CD8-positive, alpha-beta memory T cell (primary cell): ENCODE measurements at regions of chr3 and their contacts with region 1.

Region 1: DNA sequence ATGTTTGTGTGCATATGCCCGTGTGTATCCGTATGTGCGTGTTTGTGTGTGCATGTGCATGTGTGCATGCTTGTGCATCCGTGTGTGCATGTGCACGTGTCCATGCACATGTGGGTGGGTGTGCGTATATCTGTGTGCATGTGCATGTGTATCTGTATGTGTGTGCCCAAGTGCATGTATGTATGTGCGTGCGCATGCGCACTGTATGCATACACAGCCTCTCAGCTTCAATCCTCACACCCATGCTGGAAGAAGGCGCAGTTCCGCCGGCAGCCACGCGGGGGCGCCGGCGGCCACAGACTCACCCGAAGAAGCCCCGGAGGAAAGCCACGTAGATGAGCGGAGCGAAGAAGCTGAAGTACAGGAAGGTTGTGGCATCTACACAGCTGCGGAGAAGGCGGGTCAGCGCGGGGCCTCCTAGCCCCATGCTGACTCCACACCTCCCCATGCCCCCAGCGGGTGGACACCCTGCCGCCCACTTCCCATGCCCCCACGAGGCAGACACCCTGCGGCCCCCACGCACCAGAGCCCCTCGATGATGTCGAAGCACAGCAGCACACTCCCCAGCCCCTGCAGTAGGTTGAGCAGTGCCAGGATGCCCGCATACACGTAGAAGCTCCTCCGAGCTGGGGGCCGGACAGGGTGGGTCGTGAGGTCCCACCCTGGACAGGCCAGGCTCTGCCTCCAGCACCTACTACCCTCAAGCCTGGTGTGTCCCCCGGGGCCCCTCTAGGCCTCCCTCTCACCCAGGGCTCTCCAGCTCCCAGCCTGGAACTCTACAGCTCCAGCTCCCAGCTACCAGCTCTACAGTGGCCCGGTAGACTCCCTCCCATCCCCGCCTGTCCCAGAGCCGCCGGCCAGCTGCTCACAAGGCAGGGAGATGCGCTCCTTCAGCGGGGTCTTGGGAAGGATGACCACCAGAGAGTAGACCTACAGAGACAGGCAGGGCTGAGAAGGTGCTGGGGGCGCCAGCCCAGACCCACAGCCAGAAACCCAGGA is 15.4 kb downstream of the TPRA1 start:
- DNase-seq: peak; percentile 72 to 89 (median 76)
- H3K4me3 ChIP-seq: no peak overlapping the region
- H3K4me3 Mint-ChIP-seq: peak overlapping the region in 6 of 7 donors; percentile 14 to 72 (median 45)
- H3K27ac ChIP-seq: no peak overlapping the region
- H3K27ac Mint-ChIP-seq: peak overlapping the region; percentile 0 to 71 (median 52)
- H3K4me1 ChIP-seq: peaks cover 8% of the 10 kb centered on the region
- H3K4me1 Mint-ChIP-seq: peaks cover 7 to 27% (median 13%) of the 10 kb centered on the region in 3 donors
- H3K27me3 ChIP-seq: no peaks in the 10 kb centered on the region
- H3K27me3 Mint-ChIP-seq: no peaks in the 10 kb centered on the region

Region 2: GRCh38 chr3:127544192-127544802 is 30.9 kb before region 1 on chr3:
- CTCF ChIA-PET with region 1: interaction called, 12 read pairs
- POLR2A ChIA-PET with region 1: no interaction called
- DNase-seq: peak; percentile 33 to 74 (median 42)
- H3K4me3 ChIP-seq: no peak overlapping the region
- H3K4me3 Mint-ChIP-seq: peak overlapping the region in 2 of 7 donors; percentile 13 to 42
- H3K27ac ChIP-seq: no peak overlapping the region
- H3K27ac Mint-ChIP-seq: peak overlapping the region in 1 of 8 donors; percentile 15
- H3K4me1 ChIP-seq: peaks cover 2% of the 10 kb centered on the region
- H3K4me1 Mint-ChIP-seq: peaks cover 4 to 13% (median 5%) of the 10 kb centered on the region in 3 donors
- H3K27me3 ChIP-seq: no peaks in the 10 kb centered on the region
- H3K27me3 Mint-ChIP-seq: peaks cover 1 to 7% of the 10 kb centered on the region in 2 donors

Region 3: GRCh38 chr3:127590593-127591477 is 15.7 kb after region 1 on chr3 and contains the start of gene TPRA1:
- CTCF ChIA-PET with region 1: interaction called, 48 read pairs
- POLR2A ChIA-PET with region 1: interaction called, 7 read pairs
- DNase-seq: peak; percentile 61 to 89 (median 86)
- H3K4me3 ChIP-seq: peak within 1 kb of the TSS; percentile 69
- H3K4me3 Mint-ChIP-seq: peak within 1 kb of the TSS; percentile 95 to 99 (median 97)
- H3K27ac ChIP-seq: peak within 1 kb of the TSS; percentile 64
- H3K27ac Mint-ChIP-seq: peak within 1 kb of the TSS; percentile 77 to 98 (median 95)
- H3K4me1 ChIP-seq: peaks cover 17% of the 10 kb centered on the region
- H3K4me1 Mint-ChIP-seq: peaks cover 25 to 49% (median 41%) of the 10 kb centered on the region in 3 donors
- H3K27me3 ChIP-seq: no peaks in the 10 kb centered on the region
- H3K27me3 Mint-ChIP-seq: no peaks in the 10 kb centered on the region
- total RNA-seq, gene TPRA1: 48.9 to 52.1 TPM

Region 4: GRCh38 chr3:127652231-127652995 is 77.2 kb after region 1 on chr3:
- CTCF ChIA-PET with region 1: interaction called, 10 read pairs
- POLR2A ChIA-PET with region 1: no interaction called
- DNase-seq: peak in 2 of 5 donors; percentile 23 to 37
- H3K4me3 ChIP-seq: no peak overlapping the region
- H3K4me3 Mint-ChIP-seq: no peak overlapping the region
- H3K27ac ChIP-seq: no peak overlapping the region
- H3K27ac Mint-ChIP-seq: peak overlapping the region in 1 of 8 donors; percentile 81
- H3K4me1 ChIP-seq: no peaks in the 10 kb centered on the region
- H3K4me1 Mint-ChIP-seq: no peaks in the 10 kb centered on the region
- H3K27me3 ChIP-seq: no peaks in the 10 kb centered on the region
- H3K27me3 Mint-ChIP-seq: no peaks in the 10 kb centered on the region

Region 5: DNA sequence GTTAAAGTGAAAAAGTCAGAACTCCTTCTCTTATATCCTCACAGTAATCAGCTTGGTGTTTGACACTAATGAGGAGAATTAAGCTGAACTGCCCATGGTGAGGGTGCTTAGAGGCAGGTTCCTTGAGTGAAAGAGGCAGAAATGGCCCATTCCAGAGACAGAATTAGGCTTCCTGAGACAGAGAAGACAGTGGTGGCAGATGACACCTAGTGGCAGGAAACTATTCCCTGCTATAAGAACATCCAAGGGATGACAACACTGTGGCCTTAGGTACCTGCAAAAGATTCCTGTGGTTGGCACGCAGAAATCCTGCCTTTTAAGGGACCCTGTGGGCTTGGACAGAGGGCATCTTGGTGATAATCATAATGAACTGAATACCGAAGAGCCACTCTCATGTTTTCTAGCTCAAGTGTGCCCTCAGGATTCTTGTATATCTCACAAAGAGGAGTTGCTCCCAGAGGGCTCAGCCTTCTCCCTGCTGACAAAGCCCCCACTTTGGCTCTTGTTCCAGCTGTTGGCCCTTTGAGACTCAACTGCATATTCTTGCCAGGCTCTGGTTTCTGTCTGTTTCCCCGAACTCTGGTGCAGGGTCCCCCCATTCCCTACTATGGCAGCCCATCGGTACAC is 395.9 kb after region 1 on chr3:
- CTCF ChIA-PET with region 1: interaction called, 14 read pairs
- POLR2A ChIA-PET with region 1: no interaction called
- DNase-seq: peak in 1 of 5 donors; percentile 15
- H3K4me3 ChIP-seq: no peak overlapping the region
- H3K4me3 Mint-ChIP-seq: no peak overlapping the region
- H3K27ac ChIP-seq: no peak overlapping the region
- H3K27ac Mint-ChIP-seq: no peak overlapping the region
- H3K4me1 ChIP-seq: no peaks in the 10 kb centered on the region
- H3K4me1 Mint-ChIP-seq: no peaks in the 10 kb centered on the region
- H3K27me3 ChIP-seq: no peaks in the 10 kb centered on the region
- H3K27me3 Mint-ChIP-seq: peaks cover 13 to 33% of the 10 kb centered on the region in 2 donors